ENCODE measurements at regions of chr12 and their contacts with region 1.

Region 1: GRCh38 chr12:89352492-89353187 is at the start of gene DUSP6:
- DNase-seq: peak; percentile 96
- ATAC-seq: peak; percentile 69
- total RNA-seq, gene DUSP6: 26.7 TPM

Region 2: GRCh38 chr12:88519802-88520435 is 832.7 kb before region 1 on chr12:
- intact Hi-C with region 1: no loop called
- DNase-seq: no peak
- ATAC-seq: no peak

Region 3: DNA sequence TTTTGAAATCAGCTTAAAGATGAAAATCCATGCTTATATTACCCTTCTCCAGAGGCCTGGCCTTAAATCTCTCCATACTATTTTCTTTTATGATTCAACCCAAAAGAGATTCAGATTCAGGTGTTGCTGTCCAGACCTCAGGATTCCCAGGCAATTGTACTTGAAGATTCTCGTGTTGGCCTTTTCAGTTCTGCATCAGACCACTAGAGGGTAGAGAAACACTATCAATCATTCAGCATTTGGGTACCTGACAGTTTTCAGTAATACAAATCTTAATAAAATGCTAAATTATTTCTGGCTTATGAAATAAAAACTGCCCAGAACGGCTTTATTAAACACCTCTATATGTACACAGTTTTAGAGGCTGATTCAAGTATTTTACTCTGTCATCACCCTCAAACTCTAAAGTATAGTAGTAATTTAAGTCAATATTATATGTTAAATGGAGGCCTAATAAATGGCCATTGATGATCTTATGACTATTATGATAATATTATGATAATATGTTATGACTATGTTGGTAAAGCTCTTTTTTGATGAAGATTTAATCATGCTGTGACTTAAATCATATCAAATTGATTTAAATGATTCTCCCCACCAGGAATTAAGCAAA is 301.5 kb before region 1 on chr12:
- intact Hi-C with region 1: loop called (anchors 10 kb)
- DNase-seq: no peak
- ATAC-seq: peak; percentile 81

Region 4: DNA sequence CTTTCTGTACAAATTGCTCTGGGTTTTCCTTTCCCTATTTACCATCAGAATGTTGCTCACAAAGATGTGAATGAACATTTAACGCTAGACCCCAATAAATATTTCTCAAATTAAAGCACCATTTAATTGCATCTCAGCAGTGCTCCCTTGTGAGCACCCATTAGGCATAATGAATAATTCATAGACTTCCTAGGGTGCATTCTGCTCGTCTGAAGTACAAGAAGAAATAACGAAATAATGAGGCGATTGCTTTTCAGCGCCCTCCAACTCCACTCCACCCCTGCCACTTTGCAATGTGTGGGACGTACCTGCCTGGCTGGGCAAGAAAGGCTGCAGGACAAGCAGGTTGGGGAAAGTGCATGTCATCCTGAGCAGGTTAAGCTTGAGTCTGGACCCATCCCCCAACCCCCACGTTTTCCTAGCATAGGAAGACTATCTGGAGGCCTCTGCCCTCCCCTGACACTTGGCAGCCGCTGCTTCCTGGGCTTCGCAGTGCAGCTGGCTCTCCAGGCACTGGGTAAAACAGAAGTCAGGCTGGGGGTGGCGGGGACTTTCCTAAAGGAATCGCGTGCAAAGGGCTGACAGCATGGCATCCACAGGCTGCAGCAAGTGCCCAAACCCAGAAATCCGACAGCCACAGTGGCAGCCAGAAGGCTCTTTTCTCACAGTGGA is 254.1 kb before region 1 on chr12:
- intact Hi-C with region 1: no loop called
- DNase-seq: peak; percentile 67
- ATAC-seq: peak; percentile 31

Region 5: DNA sequence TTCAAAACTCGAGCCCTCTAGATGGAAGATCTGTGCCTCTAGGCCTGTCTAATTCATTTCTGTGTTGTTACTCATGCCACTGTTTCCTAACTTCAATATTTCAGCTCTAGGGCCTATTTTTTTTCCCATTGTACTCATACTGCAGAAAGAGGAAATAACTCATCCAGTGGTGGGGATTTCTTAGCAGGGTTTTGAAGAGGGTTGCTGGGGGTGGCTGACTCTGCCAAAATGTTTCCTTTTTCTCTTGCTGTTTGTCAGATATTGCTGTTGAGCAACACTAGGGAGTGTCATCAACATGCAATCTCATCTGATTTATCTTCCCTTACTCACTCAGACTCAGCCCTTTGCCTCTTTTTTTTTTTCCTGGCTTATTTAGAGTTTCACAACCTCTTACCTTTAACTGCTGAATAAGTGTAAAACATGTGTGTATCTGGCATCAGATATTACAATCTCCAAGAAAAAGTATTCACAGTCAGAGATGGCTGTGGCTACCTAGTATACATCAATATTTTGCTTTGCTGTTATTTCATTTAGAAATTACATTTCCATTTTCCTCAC is 189.9 kb before region 1 on chr12:
- intact Hi-C with region 1: loop called (anchors 10 kb)
- DNase-seq: peak; percentile 61
- ATAC-seq: peak; percentile 86

Region 6: GRCh38 chr12:89176676-89177075 is 176.0 kb before region 1 on chr12:
- intact Hi-C with region 1: no loop called
- DNase-seq: no peak
- ATAC-seq: no peak

Region 7: GRCh38 chr12:89451841-89452251 is 99.2 kb after region 1 on chr12:
- intact Hi-C with region 1: loop called (anchors 2 kb)
- DNase-seq: peak; percentile 55
- ATAC-seq: peak; percentile 66